Caco-2 (cell line): ENCODE measurements at regions of chr12 and their contacts with region 1.

Region 1: DNA sequence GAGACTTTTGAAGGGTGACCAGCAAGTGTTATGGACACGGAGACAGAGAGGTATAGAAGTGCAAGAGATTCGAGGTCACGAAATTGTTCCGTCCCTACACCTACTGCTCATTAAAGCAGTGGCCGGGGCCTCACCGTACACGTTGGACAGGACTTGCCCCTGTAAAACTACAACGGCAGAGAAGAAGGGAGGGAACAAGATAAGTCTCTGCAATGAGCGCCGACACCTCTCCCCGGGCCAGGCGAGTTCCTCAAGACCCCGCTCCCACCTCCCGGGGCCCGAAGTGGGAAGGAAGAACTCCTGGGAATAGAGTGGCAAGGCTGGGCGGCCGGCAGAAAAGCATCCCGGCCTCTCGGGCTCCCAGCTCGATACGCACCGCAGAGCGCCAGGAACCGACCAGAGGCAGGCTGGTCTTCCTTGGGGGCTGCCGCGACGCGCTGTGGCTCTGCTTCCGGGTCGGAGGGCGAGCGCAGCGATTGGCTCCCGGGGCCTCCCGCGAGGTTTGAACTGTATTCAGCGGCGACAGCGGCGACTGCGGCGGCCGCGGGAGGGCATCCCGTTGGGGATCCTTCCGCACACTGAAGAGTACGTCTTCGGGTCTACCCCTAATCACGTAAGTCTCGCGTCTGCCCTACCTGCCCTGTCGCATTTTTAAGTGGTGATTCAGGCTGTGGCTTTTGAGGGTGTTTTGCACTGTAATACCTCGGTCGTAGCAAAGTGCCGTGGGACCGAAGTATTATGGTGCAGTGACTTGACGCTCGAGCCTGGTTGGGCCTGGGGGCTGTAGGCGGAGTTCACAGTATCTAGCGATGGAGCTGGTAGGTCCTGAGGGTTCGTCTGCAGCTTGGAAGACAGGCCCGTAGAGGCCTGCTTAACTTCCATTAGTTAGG is at the starts of genes NUP37 and PARPBP:
- DNase-seq: peak; percentile 94 to 95
- H3K4me3 ChIP-seq: peak within 1 kb of the TSS; percentile 55
- H3K4me3 Mint-ChIP-seq: peak within 1 kb of the TSS; percentile 90
- H3K27ac Mint-ChIP-seq: peak within 1 kb of the TSS; percentile 49
- H3K4me1 ChIP-seq: peaks cover 3% of the 10 kb centered on the region; the same call in 1 of the 2 replicates
- H3K4me1 Mint-ChIP-seq: no peaks in the 10 kb centered on the region
- H3K27me3 ChIP-seq: no peaks in the 10 kb centered on the region
- H3K27me3 Mint-ChIP-seq: no peaks in the 10 kb centered on the region
- CTCF ChIP-seq: no peak
- total RNA-seq, gene NUP37: 78.9 and 87.4 TPM in 2 replicates
- total RNA-seq, gene PARPBP: 28.2 and 30.4 TPM in 2 replicates

Region 2: DNA sequence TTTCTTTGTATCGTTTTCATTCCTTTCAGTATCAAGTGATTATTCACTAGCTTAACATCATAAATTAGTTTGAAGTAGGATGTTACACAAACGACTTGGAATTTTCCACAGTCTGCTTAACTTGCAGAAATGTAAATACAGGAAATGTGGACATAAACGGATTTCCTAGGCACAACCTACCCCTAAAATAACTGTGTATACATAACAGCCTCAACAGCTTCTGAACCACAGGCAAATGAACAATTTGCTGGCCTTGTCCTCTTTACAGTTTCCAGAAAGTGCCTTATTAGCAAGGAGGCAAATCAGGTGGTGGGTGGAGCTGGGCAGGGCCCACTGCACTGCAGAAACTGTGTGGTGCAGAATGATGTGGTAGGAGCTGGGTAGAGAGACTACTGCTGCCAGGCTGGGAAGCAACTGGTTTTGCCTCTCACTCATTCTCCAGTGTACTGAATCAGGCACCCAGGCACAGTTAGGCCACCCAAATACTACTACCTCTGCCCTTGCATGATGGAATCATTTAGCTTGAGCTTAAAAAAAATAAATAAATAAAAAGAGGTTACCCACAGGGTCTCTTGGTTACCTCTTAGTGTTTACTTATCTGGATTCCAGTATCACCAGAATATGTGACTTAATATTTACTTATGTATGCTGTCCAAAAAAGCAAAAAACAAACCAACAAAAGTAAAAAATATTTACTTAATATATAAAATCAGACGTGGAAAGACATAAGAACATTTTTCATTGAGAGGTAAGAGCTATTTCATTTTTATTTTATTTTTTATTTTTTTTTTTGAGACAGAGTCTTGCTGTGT is 228.3 kb before region 1 on chr12:
- CTCF ChIA-PET with region 1: no interaction called
- POLR2A ChIA-PET with region 1: no interaction called
- intact Hi-C with region 1: no loop called
- DNase-seq: peak in 1 of 2 experiments; percentile 11
- H3K4me3 ChIP-seq: no peak overlapping the region
- H3K4me3 Mint-ChIP-seq: no peak overlapping the region
- H3K27ac Mint-ChIP-seq: no peak overlapping the region
- H3K4me1 ChIP-seq: peaks cover 10% of the 10 kb centered on the region
- H3K4me1 Mint-ChIP-seq: peaks cover 7% of the 10 kb centered on the region
- H3K27me3 ChIP-seq: no peaks in the 10 kb centered on the region
- H3K27me3 Mint-ChIP-seq: no peaks in the 10 kb centered on the region
- CTCF ChIP-seq: no peak

Region 3: DNA sequence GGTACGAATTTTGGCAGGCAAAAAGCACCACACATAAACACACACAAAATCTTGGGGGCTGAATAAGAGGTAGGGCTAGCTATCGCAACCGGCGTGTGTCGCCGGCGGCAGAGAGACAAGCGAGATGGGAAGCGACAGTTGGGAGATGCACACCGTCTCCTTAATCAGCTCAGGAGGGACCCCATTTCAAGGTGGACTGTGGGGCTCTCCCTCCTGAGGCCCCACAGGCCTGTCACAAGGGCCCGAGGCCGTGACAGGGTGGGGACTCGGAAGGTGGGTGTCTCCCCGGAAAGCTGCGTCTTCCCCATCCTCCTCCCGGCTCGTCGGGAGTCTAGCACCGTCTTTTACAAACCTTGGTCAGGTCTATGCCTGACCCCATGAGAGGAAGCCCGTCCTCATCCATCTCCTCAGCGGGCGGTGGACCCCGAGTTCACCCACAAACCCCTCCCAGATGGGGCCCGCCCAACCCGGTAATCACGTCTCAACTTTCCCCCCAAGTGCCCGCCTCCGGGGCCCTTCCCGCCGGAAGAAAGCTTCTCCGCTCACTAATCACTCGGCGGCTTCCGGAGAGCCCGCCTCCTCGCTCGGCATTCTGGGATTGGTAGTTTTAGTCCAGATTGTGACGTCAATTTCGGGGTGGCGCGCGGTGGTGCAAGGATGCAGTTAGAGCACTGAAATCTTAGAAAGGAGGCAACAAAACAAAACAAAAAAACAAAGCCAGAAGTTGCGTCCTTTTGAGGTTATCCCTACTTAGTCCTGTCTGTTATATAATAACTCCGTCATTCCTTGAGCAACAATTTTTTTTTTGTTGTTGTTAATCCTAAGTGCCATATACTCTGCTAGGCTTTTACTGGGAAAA is 58.1 kb before region 1 on chr12 and contains the start of gene WASHC3:
- CTCF ChIA-PET with region 1: no interaction called
- POLR2A ChIA-PET with region 1: interaction called, 6 read pairs
- intact Hi-C with region 1: loop called (anchors 1 kb)
- DNase-seq: peak; percentile 93 to 94
- H3K4me3 ChIP-seq: peak within 1 kb of the TSS; percentile 46
- H3K4me3 Mint-ChIP-seq: peak within 1 kb of the TSS; percentile 99
- H3K27ac Mint-ChIP-seq: peak within 1 kb of the TSS; percentile 94
- H3K4me1 ChIP-seq: peaks cover 20% of the 10 kb centered on the region
- H3K4me1 Mint-ChIP-seq: peaks cover 8% of the 10 kb centered on the region
- H3K27me3 ChIP-seq: no peaks in the 10 kb centered on the region
- H3K27me3 Mint-ChIP-seq: no peaks in the 10 kb centered on the region
- CTCF ChIP-seq: no peak
- total RNA-seq, gene WASHC3: 40.4 and 43.2 TPM in 2 replicates

Region 4: DNA sequence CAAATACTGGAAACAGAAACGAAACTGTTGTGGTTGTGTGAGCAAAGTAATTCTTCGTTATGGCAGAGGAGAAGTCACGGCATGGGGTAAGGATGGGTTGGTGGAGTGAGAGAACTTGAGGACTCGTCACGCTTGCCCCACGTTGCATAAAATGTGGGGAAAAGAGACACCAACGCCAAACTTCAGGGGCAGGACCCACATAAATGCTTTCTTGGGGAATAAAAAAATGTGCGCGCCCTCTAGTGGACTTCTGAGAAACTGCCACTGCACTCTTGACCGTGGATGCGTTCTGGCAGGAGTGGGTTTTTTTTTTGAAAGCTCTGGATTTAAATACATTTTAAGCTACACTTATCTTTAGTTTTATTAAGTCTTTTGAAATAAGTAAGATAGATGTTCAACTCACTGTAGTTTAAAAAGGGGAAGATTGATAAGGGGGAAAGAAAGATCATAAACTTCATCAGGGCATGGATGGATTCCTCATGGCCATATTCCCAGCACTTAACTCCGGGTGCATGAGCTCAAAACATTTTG is 364.6 kb after region 1 on chr12:
- CTCF ChIA-PET with region 1: no interaction called
- POLR2A ChIA-PET with region 1: no interaction called
- intact Hi-C with region 1: loop called (anchors 2 kb)
- DNase-seq: peak; percentile 34 to 42
- H3K4me3 ChIP-seq: no peak overlapping the region
- H3K4me3 Mint-ChIP-seq: no peak overlapping the region
- H3K27ac Mint-ChIP-seq: peak overlapping the region; percentile 33
- H3K4me1 ChIP-seq: no peaks in the 10 kb centered on the region
- H3K4me1 Mint-ChIP-seq: no peaks in the 10 kb centered on the region
- H3K27me3 ChIP-seq: no peaks in the 10 kb centered on the region
- H3K27me3 Mint-ChIP-seq: no peaks in the 10 kb centered on the region
- CTCF ChIP-seq: peak; percentile 84 to 85